ENCODE measurements at regions of chr22 and their contacts with region 1.

Region 1: DNA sequence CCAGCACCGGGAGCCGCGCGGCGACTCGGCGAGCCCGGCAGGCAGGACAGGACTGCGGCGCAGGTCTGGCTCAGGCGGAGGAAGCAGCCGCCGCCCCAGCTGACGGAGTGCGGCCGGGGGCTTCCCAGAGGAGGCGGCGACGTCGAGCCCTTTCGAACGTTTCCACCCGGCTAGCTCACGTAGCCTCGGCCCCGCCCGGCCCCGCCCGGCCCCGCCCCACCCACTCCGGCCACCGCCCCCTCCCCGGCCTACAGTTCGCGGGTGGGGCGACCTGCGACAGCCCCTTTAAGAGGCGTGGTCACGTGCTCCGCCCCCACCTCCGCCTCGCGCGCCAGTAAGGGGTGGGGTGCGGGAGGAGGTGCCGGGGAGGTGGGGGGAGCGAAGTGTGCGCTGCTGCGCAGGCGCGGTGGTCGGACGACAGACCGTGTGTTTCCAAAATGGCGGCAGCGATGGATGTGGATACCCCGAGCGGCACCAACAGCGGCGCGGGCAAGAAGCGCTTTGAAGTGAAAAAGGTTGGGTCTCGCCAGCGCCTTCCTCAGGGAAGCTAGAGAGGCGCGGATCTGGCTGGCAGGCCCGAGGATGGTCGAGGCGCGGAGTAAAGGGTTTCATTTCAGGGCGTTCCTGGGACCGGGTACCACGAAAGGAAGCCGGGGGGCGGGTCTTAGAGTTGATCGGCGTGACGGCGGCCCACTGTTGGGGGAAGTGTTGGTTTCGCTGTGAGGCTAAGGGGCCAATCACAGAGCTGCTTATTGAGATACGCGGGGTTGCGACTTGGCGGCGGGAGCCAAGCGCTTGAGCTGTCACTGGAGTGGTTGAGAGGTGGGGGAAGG is at the start of gene RBX1:
- DNase-seq: peak; percentile 96
- ATAC-seq: peak; percentile 94
- H3K4me3 ChIP-seq: peak within 1 kb of the TSS; percentile 83 to 94 (median 92)
- H3K27ac ChIP-seq: peak within 1 kb of the TSS; percentile 78
- H3K4me1 ChIP-seq: peaks cover 23% of the 10 kb centered on the region
- H3K27me3 ChIP-seq: no peaks in the 10 kb centered on the region; a peak in 1 of 5 replicates
- CTCF ChIP-seq: no peak
- EP300 ChIP-seq: no peak; a peak in 1 of 4 replicates
- POLR2A ChIP-seq: peak; percentile 55 to 83
- RAD21 ChIP-seq: peak; percentile 54
- total RNA-seq, gene RBX1: 84.9 and 111 TPM in 2 replicates

Region 2: GRCh38 chr22:40856513-40857308 is 94.5 kb before region 1 on chr22 and contains the starts of genes ST13 and XPNPEP3:
- CTCF ChIA-PET with region 1: no interaction called
- POLR2A ChIA-PET with region 1: interaction called, 10 read pairs
- in situ Hi-C with region 1: no loop called
- intact Hi-C with region 1: no loop called
- DNase-seq: peak; percentile 92
- ATAC-seq: peak; percentile 94
- H3K4me3 ChIP-seq: peak within 1 kb of the TSS; percentile 85 to 96 (median 90)
- H3K27ac ChIP-seq: peak within 1 kb of the TSS; percentile 96
- H3K4me1 ChIP-seq: peaks cover 39% of the 10 kb centered on the region
- H3K27me3 ChIP-seq: no peaks in the 10 kb centered on the region; a peak in 1 of 5 replicates
- CTCF ChIP-seq: peak; percentile 50; the same call in 1 of the 2 replicates
- EP300 ChIP-seq: peak in 1 of 2 experiments; percentile 77; a peak in 3 of 4 replicates
- POLR2A ChIP-seq: peak; percentile 75 to 83
- RAD21 ChIP-seq: no peak
- total RNA-seq, gene ST13: 274 and 393 TPM in 2 replicates
- total RNA-seq, gene XPNPEP3: 10.3 and 15.9 TPM in 2 replicates

Region 3: DNA sequence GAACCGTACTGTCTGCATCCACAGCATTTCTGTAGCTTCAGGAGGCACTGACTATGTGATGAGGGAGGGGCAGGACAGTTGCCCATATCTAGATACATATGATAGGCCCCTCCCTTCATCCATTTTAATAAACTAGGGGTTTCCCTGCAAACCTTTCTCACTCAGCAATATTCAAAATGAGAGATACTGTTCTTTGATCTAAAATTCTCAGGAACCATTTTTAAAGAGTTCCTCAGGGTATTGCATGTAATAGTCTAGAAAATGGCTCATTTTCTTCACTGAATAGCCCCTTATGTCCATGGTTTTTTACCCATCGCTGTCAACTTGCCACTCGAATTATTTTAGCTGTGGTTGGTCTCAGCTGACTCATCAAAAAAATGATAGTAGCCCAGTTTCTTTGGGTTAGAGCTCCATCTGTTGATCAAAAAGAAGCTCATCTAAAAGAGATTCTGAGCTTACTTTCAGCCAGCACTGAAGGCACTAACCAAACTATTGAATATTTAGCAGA is 52.3 kb before region 1 on chr22:
- CTCF ChIA-PET with region 1: no interaction called
- POLR2A ChIA-PET with region 1: no interaction called
- in situ Hi-C with region 1: no loop called
- intact Hi-C with region 1: no loop called
- DNase-seq: peak; percentile 62
- ATAC-seq: no peak; the same call in 2 of the 3 replicates
- H3K4me3 ChIP-seq: no peak overlapping the region
- H3K27ac ChIP-seq: no peak overlapping the region
- H3K4me1 ChIP-seq: no peaks in the 10 kb centered on the region
- H3K27me3 ChIP-seq: no peaks in the 10 kb centered on the region
- CTCF ChIP-seq: peak; percentile 72
- EP300 ChIP-seq: no peak
- POLR2A ChIP-seq: no peak
- RAD21 ChIP-seq: peak; percentile 58; the same call in 1 of the 2 replicates

Region 4: DNA sequence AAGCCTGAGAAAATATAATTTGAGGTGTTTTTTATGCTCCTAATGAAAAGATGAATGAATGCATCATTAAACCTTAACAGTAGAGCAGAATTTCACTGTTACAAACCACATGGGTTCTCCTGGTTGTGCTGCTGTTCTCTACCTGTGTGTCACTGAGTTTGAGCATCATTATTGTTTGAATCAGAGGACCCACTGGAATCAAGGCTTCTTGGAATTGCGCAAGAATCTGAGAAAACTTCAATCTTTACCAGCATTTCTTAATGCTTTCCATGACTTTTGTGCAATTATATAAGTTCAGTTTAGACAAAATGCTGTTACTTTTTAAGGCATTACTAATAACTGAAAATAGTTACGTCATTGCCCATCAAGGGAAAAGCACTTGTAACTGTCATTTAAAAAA is 18.8 kb before region 1 on chr22:
- CTCF ChIA-PET with region 1: no interaction called
- POLR2A ChIA-PET with region 1: no interaction called
- in situ Hi-C with region 1: no loop called
- intact Hi-C with region 1: no loop called
- DNase-seq: no peak
- ATAC-seq: no peak
- H3K4me3 ChIP-seq: no peak overlapping the region
- H3K27ac ChIP-seq: no peak overlapping the region
- H3K4me1 ChIP-seq: no peaks in the 10 kb centered on the region
- H3K27me3 ChIP-seq: no peaks in the 10 kb centered on the region
- CTCF ChIP-seq: no peak
- EP300 ChIP-seq: no peak
- POLR2A ChIP-seq: no peak
- RAD21 ChIP-seq: no peak

Region 5: DNA sequence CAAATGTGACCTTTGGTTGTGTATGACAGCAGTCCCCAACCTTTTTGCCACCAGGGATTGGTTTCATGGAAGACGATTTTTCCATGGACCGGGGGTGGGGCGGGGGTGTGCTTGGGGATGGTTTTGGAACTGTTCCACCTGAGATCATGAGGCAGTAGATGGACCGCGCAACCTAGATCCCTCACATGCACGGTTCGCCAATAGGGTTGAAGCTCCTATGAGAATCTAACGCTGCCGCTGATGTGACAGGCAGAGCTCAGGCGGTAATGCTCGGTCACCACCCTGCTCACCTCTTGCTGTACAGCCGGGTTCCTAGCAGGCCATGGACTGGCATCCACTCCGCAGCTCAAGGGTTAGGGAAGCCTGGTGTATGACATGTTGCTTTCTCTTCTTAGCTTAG is 21.9 kb after region 1 on chr22:
- CTCF ChIA-PET with region 1: no interaction called
- POLR2A ChIA-PET with region 1: interaction called, 13 read pairs
- in situ Hi-C with region 1: no loop called
- intact Hi-C with region 1: no loop called
- DNase-seq: no peak
- ATAC-seq: no peak
- H3K4me3 ChIP-seq: no peak overlapping the region
- H3K27ac ChIP-seq: no peak overlapping the region
- H3K4me1 ChIP-seq: no peaks in the 10 kb centered on the region
- H3K27me3 ChIP-seq: no peaks in the 10 kb centered on the region; a peak in 1 of 5 replicates
- CTCF ChIP-seq: no peak
- EP300 ChIP-seq: no peak
- POLR2A ChIP-seq: no peak
- RAD21 ChIP-seq: no peak

Region 6: DNA sequence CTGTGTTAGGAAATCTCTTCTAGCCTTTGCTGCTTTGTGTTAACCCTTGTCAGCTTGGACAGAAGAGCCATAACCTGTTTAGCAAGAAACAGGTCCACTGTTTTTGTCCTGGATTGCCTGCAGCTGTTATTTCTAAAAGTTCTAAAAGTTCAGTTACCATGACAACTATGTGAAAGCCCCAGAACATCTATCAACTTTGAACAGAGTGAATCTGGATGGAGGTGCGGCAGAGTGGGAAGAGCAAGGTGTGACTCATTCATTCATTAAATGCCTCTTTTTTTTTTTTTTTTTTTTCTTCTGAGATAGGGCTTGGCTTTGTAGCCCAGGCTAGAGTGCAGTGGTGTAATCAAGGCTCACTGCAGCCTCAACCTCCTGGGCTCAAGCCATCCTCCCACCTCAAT is 50.5 kb after region 1 on chr22:
- CTCF ChIA-PET with region 1: no interaction called
- POLR2A ChIA-PET with region 1: interaction called, 17 read pairs
- in situ Hi-C with region 1: no loop called
- intact Hi-C with region 1: no loop called
- DNase-seq: peak; percentile 41
- ATAC-seq: peak; percentile 68
- H3K4me3 ChIP-seq: no peak overlapping the region
- H3K27ac ChIP-seq: peak overlapping the region; percentile 48
- H3K4me1 ChIP-seq: peaks cover 34% of the 10 kb centered on the region
- H3K27me3 ChIP-seq: no peaks in the 10 kb centered on the region
- CTCF ChIP-seq: no peak
- EP300 ChIP-seq: no peak
- POLR2A ChIP-seq: no peak
- RAD21 ChIP-seq: no peak

Region 7: DNA sequence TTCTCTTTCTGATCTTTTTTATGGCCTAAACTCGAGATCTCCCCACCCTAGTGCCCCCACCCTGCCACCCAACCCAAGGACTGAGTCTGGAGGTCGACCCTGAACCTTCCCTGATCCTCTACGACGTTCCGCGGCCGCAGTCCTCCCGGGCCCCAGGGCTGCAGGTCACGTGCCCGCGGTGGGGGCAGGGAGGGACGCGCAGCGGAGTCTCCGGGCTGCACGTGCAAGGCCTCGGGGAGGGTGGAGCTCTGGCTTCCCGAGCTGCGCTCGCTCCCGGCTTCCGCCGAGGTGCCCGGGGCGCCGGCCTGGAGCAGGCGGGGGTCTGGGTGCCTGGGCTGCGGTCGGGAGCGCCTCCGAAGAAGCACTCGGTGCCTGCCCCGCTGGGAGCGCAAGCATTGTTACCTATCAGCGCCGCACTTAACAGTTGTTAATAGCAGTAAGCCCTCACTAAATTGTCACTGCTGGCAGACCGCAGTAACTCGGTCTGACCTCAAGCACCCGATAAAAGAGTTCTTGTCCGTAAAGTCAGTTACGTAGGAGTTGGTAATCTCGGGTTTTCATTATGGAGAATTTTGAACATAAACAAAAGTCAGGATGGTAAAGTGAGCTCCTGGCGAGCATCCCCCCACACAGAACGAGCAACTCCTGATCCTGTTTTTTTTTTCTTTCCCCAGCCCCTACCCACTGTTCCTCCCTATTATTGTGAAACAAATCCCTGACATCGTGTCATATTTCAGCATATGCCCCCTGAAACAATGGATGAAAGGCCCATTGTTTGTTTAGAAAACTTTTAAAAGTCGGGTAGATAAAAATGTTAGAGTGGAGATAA is 71.5 kb after region 1 on chr22:
- CTCF ChIA-PET with region 1: no interaction called
- POLR2A ChIA-PET with region 1: interaction called, 48 read pairs
- in situ Hi-C with region 1: no loop called
- intact Hi-C with region 1: no loop called
- DNase-seq: peak; percentile 79
- ATAC-seq: peak; percentile 73
- H3K4me3 ChIP-seq: peak overlapping the region; percentile 66 to 88 (median 75)
- H3K27ac ChIP-seq: peak overlapping the region; percentile 75
- H3K4me1 ChIP-seq: peaks cover 33% of the 10 kb centered on the region
- H3K27me3 ChIP-seq: peaks cover 2 to 9% of the 10 kb centered on the region in 2 experiments; a peak in 2 of 5 replicates
- CTCF ChIP-seq: no peak; the same call in none of the 2 replicates
- EP300 ChIP-seq: peak in 1 of 2 experiments; percentile 53; a peak in 2 of 4 replicates
- POLR2A ChIP-seq: no peak; a peak in 1 of 4 replicates
- RAD21 ChIP-seq: no peak

Region 8: DNA sequence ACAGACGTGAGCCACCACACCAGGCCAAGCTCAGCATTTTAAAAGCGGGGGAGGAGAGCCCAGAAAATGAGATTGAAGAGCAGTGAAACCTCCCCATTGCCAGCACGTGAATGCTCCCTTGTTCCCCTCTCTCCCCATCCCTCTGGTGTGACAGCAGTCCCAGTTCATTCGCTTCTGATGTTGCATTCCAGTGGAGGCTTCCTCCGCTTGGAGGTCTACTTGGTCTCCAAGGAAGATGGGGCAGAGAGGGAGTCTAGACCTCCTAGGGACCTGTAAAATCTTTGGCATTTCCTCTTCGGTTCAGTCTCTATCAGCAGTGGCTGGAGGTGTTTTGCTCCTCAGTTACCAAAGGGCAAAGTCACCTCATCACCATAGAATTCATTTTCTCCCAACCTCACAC is 111.0 kb after region 1 on chr22:
- CTCF ChIA-PET with region 1: no interaction called
- POLR2A ChIA-PET with region 1: no interaction called
- in situ Hi-C with region 1: no loop called
- intact Hi-C with region 1: no loop called
- DNase-seq: no peak
- ATAC-seq: no peak
- H3K4me3 ChIP-seq: no peak overlapping the region
- H3K27ac ChIP-seq: no peak overlapping the region
- H3K4me1 ChIP-seq: 0 out of 2 replicates have a peak, but pooled peaks cover 6% of the 10 kb centered on the region
- H3K27me3 ChIP-seq: 0 out of 5 replicates have a peak, but pooled peaks cover 0 to 2% of the 10 kb centered on the region in 2 experiments
- CTCF ChIP-seq: no peak
- EP300 ChIP-seq: no peak
- POLR2A ChIP-seq: no peak
- RAD21 ChIP-seq: no peak

Region 9: DNA sequence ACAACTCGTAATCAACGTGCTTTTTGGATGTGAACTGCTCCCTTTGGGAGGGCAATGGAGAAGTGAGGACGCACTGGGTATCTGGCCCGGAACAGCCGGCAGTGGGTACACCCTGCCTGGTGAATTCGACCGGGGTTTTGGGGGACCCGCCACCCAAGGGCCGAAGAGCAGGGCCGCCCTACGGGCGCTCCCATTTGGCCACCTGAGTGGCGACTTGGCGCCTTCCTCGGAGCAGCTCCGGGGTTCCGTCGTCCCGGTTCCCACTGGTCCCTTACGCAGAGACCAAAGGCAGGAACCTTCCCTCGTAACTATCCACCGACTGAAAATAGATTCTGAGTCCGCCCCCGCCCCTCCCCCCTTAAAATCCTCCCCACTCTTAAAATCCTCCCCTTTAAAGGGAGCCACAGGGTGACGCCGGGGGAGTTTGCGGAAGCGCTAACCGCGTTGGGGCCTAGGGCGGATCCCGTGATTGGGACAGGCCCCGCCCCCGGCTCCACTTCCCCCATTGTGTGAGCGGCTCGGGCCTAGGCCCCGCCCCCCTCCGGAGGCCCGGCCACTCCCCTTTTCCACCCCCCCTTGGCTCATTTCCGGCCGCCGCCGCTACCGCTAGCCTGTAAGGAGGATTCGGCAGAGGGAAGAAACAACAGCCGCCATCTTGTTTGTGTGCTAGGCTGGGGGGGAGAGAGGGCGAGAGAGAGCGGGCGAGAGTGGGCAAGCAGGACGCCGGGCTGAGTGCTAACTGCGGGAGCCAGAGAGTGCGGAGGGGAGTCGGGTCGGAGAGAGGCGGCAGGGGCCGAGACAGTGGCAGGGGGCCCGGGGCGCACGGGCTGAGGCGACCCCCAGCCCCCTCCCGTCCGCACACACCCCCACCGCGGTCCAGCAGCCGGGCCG is 140.2 kb after region 1 on chr22:
- CTCF ChIA-PET with region 1: no interaction called
- POLR2A ChIA-PET with region 1: interaction called, 71 read pairs
- in situ Hi-C with region 1: loop called (anchors 5 kb)
- intact Hi-C with region 1: loop called (anchors 1 kb)
- DNase-seq: peak; percentile 96
- ATAC-seq: peak; percentile 90
- H3K4me3 ChIP-seq: peak overlapping the region; percentile 90 to 97 (median 92)
- H3K27ac ChIP-seq: peak overlapping the region; percentile 99
- H3K4me1 ChIP-seq: peaks cover 26% of the 10 kb centered on the region
- H3K27me3 ChIP-seq: no peaks in the 10 kb centered on the region
- CTCF ChIP-seq: no peak
- EP300 ChIP-seq: no peak
- POLR2A ChIP-seq: peak; percentile 48 to 70
- RAD21 ChIP-seq: peak; percentile 26; the same call in 1 of the 2 replicates